ENCODE measurements at regions of chr3 and their contacts with region 1.

Region 1: GRCh38 chr3:33074217-33075067 is 22.5 kb downstream of the GLB1 start:
- DNase-seq: peak; percentile 84
- ATAC-seq: peak; percentile 88
- H3K4me3 ChIP-seq: no peak overlapping the region
- H3K27ac ChIP-seq: no peak overlapping the region
- H3K4me1 ChIP-seq: no peaks in the 10 kb centered on the region
- H3K27me3 ChIP-seq: no peaks in the 10 kb centered on the region
- CTCF ChIP-seq: peak; percentile 97

Region 2: GRCh38 chr3:32733631-32734229 is 340.7 kb before region 1 on chr3:
- CTCF ChIA-PET with region 1: no interaction called
- POLR2A ChIA-PET with region 1: no interaction called
- intact Hi-C with region 1: loop called (anchors 5 kb)
- DNase-seq: peak; percentile 62
- ATAC-seq: peak; percentile 73
- H3K4me3 ChIP-seq: no peak overlapping the region
- H3K27ac ChIP-seq: no peak overlapping the region
- H3K4me1 ChIP-seq: no peaks in the 10 kb centered on the region
- H3K27me3 ChIP-seq: no peaks in the 10 kb centered on the region
- CTCF ChIP-seq: peak; percentile 81

Region 3: DNA sequence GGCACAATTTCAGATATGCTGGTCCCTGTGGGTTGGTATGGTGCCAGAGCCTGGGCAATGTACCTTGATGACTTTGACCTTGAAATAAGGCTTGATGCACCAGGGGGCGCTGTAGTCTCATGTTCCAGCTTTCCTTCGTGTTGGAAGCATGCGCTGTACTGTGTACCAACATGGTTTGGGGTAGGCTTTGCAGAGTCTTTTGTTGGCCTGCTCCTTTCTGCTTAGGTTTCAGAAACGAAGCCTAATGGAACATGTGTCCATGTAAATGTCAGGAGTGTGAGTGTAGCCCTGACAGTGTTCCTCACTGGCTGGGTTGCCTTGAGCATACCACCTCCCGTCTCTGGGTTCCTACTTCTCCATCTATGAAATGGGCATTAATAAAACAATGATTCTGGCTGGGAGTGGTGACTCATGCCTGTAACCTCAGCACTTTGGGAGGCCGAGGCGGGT is 126.6 kb before region 1 on chr3:
- CTCF ChIA-PET with region 1: interaction called, 6 read pairs
- POLR2A ChIA-PET with region 1: no interaction called
- intact Hi-C with region 1: loop called (anchors 1 kb)
- DNase-seq: peak; percentile 97
- ATAC-seq: peak; percentile 83
- H3K4me3 ChIP-seq: no peak overlapping the region
- H3K27ac ChIP-seq: no peak overlapping the region
- H3K4me1 ChIP-seq: 0 out of 2 replicates have a peak, but pooled peaks cover 6% of the 10 kb centered on the region
- H3K27me3 ChIP-seq: no peaks in the 10 kb centered on the region
- CTCF ChIP-seq: peak; percentile 94

Region 4: DNA sequence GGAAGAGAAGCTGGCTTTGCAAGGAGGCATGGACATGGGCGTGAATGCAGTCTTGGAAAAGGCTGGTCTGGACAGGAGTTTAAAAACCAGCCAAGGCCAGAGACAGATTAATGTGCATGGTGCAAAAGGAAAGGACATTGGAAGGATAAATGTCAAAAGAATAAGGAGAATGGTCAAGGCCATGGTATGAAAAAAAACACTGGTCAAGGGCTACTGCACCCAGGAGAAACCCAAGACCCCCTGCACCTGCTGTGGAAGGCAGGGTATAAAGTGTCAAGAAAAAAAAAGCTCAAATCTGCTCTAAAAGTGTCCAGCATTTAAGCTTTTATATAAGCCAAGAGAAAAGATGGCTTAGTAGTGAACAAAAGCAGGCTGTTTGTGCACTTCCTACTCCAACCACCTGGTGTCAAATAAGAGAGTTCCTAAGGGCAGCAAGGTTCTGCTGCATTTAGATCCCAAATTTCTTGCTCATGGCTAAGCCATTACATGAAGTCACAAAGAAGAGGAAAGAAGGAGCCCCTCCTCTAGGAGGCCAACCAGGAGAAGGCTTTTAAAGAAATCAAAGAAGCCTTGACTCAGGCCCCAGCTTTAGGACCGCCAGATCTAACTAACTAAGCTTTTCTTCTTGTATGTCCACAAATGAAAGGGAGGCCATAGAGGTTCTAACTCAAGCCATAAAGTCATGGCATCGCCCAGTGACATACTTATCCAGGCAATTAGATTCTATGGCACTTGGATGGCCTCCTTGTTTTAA is 106.1 kb before region 1 on chr3:
- CTCF ChIA-PET with region 1: interaction called, 15 read pairs
- POLR2A ChIA-PET with region 1: no interaction called
- intact Hi-C with region 1: no loop called
- DNase-seq: no peak
- ATAC-seq: no peak
- H3K4me3 ChIP-seq: no peak overlapping the region
- H3K27ac ChIP-seq: no peak overlapping the region
- H3K4me1 ChIP-seq: peaks cover 19% of the 10 kb centered on the region
- H3K27me3 ChIP-seq: no peaks in the 10 kb centered on the region
- CTCF ChIP-seq: peak; percentile 23; the same call in 1 of the 2 replicates

Region 5: GRCh38 chr3:33023172-33024136 is 51.0 kb before region 1 on chr3:
- CTCF ChIA-PET with region 1: interaction called, 3 read pairs
- POLR2A ChIA-PET with region 1: no interaction called
- intact Hi-C with region 1: loop called (anchors 2 kb)
- DNase-seq: peak; percentile 77
- ATAC-seq: peak; percentile 68
- H3K4me3 ChIP-seq: no peak overlapping the region
- H3K27ac ChIP-seq: no peak overlapping the region
- H3K4me1 ChIP-seq: peaks cover 26% of the 10 kb centered on the region
- H3K27me3 ChIP-seq: no peaks in the 10 kb centered on the region
- CTCF ChIP-seq: 0 out of 2 replicates have a peak, but pooled peaks have one; percentile 18

Region 6: DNA sequence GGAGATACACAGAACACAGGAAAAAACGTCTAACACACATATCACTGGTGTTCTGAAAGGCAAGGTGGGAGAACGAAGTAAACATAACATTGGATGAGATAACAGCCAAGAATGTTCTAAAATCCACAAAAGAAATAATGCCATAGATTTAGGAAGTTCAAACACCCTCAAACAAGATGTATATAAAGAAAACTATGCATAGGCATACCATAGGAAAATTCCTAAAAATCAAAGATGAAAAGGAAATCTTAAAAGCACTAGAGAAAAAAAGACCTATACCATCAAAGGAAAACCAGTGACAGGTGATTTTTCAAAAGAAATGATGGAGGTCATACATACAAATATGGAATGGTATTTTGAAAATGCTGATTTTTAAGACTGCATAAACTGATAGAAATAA is 34.8 kb before region 1 on chr3:
- CTCF ChIA-PET with region 1: no interaction called
- POLR2A ChIA-PET with region 1: interaction called, 10 read pairs
- intact Hi-C with region 1: no loop called
- DNase-seq: no peak
- ATAC-seq: no peak
- H3K4me3 ChIP-seq: no peak overlapping the region
- H3K27ac ChIP-seq: no peak overlapping the region
- H3K4me1 ChIP-seq: peaks cover 15% of the 10 kb centered on the region
- H3K27me3 ChIP-seq: no peaks in the 10 kb centered on the region
- CTCF ChIP-seq: no peak

Measured in PC-3 (cell line).